AG04450 (cell line): ENCODE measurements at regions of chr22 and their contacts with region 1.

Region 1: GRCh38 chr22:39514373-39514973 is 5.9 kb upstream of the ATF4 start:
- DNase-seq: no peak
- H3K4me3 ChIP-seq: no peak overlapping the region
- H3K27ac ChIP-seq: no peak overlapping the region
- H3K27me3 ChIP-seq: no peaks in the 10 kb centered on the region
- CTCF ChIP-seq: peak; percentile 82

Region 2: DNA sequence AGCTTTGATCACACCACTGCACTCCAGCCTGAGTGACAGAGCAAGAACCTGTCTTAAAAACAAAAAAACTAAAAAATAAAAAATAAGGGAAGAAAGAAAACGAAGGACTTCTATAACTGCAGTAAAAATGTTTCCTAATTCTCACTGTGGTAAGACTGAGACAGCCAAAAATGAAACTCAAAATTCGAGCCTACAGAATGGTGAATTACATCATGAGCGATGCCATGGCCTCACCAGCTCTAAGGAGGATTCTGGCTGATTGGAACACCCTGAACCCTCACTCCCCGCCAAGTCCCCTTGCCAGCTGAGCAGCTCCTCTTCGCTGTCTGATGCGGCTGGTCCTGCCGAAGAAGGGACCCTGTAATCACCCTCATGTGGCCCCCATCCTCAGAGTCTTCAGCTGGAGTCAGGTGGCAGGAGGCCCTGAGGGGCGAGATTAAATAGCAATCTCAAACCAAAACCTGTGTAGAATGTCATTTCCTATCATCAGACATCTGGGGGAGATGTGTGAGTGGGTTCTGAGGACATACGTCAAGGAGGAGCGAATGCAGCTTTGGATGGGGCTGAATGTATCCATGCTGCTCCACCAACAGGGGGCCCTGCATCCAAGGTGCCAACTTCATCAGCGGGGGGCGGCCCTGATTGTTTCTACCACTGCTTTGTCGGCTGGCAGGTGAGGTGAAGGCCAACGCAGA is 298.9 kb before region 1 on chr22:
- CTCF ChIA-PET with region 1: no interaction called
- POLR2A ChIA-PET with region 1: no interaction called
- DNase-seq: no peak
- H3K4me3 ChIP-seq: no peak overlapping the region
- H3K27ac ChIP-seq: no peak overlapping the region
- H3K27me3 ChIP-seq: peaks cover 3% of the 10 kb centered on the region
- CTCF ChIP-seq: peak; percentile 41

Region 3: GRCh38 chr22:39343259-39344048 is 171.0 kb before region 1 on chr22:
- CTCF ChIA-PET with region 1: interaction called, 10 read pairs
- POLR2A ChIA-PET with region 1: interaction called, 8 read pairs
- DNase-seq: no peak
- H3K4me3 ChIP-seq: no peak overlapping the region
- H3K27ac ChIP-seq: no peak overlapping the region
- H3K27me3 ChIP-seq: peaks cover 2% of the 10 kb centered on the region
- CTCF ChIP-seq: peak; percentile 88

Region 4: GRCh38 chr22:39395936-39396796 is 118.3 kb before region 1 on chr22:
- CTCF ChIA-PET with region 1: interaction called, 11 read pairs
- POLR2A ChIA-PET with region 1: interaction called, 9 read pairs
- DNase-seq: no peak
- H3K4me3 ChIP-seq: no peak overlapping the region
- H3K27ac ChIP-seq: no peak overlapping the region
- H3K27me3 ChIP-seq: no peaks in the 10 kb centered on the region
- CTCF ChIP-seq: no peak

Region 5: GRCh38 chr22:39496131-39496838 is 18.2 kb before region 1 on chr22:
- CTCF ChIA-PET with region 1: interaction called, 17 read pairs
- POLR2A ChIA-PET with region 1: interaction called, 18 read pairs
- DNase-seq: no peak
- H3K4me3 ChIP-seq: no peak overlapping the region
- H3K27ac ChIP-seq: no peak overlapping the region
- H3K27me3 ChIP-seq: no peaks in the 10 kb centered on the region
- CTCF ChIP-seq: peak; percentile 85